ENCODE measurements at regions of chr6 and their contacts with region 1.

Region 1: GRCh38 chr6:51814418-51814817 is 273.0 kb downstream of the PKHD1 start:
- DNase-seq: no peak
- ATAC-seq: no peak
- H3K4me3 ChIP-seq: no peak overlapping the region
- H3K27ac ChIP-seq: no peak overlapping the region
- H3K4me1 ChIP-seq: no peaks in the 10 kb centered on the region
- H3K27me3 ChIP-seq: no peaks in the 10 kb centered on the region
- CTCF ChIP-seq: no peak

Region 2: DNA sequence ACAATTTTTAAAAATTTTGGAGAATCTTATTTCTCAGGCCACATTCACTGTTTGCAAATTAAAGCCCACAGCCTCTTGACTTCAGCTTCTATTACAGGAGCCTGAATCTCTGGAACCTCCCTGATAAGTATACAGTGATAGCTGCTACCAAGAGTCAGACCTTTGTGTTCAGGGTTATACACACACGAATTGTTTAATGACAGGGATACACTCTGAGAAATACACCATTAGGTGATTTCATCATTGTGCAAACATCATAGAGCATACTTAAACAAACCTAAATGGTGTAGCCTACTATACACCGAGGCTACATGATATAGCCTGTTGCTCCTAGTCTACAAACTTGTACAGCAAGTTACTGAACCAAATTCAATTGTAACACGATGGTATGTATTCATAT is 200.9 kb before region 1 on chr6:
- CTCF ChIA-PET with region 1: no interaction called
- POLR2A ChIA-PET with region 1: no interaction called
- intact Hi-C with region 1: no loop called
- DNase-seq: peak; percentile 62
- ATAC-seq: peak; percentile 72
- H3K4me3 ChIP-seq: no peak overlapping the region
- H3K27ac ChIP-seq: no peak overlapping the region
- H3K4me1 ChIP-seq: peaks cover 23% of the 10 kb centered on the region
- H3K27me3 ChIP-seq: no peaks in the 10 kb centered on the region
- CTCF ChIP-seq: no peak

Region 3: GRCh38 chr6:51753635-51754034 is 60.8 kb before region 1 on chr6:
- CTCF ChIA-PET with region 1: interaction called, 11 read pairs
- POLR2A ChIA-PET with region 1: no interaction called
- intact Hi-C with region 1: no loop called
- DNase-seq: peak; percentile 50
- ATAC-seq: no peak
- H3K4me3 ChIP-seq: no peak overlapping the region
- H3K27ac ChIP-seq: no peak overlapping the region
- H3K4me1 ChIP-seq: no peaks in the 10 kb centered on the region
- H3K27me3 ChIP-seq: no peaks in the 10 kb centered on the region
- CTCF ChIP-seq: peak; percentile 71